Activated CD4-positive, alpha-beta memory T cell treated with anti-CD3 and anti-CD28 coated beads for 36 hours (primary cell): ENCODE measurements at regions of chr2 and their contacts with region 1.

Region 1: DNA sequence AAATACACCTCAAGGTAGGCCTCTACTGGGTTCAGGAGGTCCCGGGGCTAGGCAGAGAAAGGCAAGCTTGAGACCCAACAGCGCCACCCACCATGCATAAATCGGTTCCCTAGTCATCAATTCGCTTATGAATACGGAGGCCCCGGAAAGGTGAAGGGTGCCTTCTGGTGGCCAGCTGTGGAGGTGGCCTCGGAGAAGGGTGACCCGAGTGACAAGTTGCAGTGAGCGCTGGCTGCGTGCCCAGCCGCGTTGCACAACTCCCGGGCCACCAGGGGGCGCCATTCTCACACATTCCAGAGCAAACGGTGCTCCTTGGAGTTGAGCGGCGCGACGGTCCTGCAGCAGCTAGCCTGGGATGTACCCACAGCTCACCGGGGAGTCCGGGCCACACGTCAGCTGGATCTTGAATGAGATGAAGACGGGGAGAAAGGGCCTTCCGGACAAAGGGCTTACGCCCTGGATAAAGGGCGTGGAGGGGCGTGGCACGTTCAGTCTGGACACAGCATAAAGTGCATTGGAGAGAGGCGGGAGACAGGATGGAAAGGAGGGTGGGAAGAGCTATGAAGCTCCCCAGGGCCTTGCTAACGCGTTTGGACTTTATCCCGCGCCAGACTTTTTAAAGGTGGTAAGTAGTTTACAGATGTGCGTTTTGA is 20.4 kb downstream of the TMSB10 start:
- DNase-seq: peak; percentile 100
- H3K4me3 Mint-ChIP-seq: peak overlapping the region; percentile 82
- H3K27ac Mint-ChIP-seq: peak overlapping the region; percentile 93
- H3K4me1 Mint-ChIP-seq: peaks cover 41% of the 10 kb centered on the region
- H3K27me3 Mint-ChIP-seq: no peaks in the 10 kb centered on the region

Region 2: GRCh38 chr2:84495539-84496146 is 430.2 kb before region 1 on chr2:
- CTCF ChIA-PET with region 1: interaction called, 18 read pairs
- POLR2A ChIA-PET with region 1: no interaction called
- intact Hi-C with region 1: loop called (anchors 1 kb)
- DNase-seq: no peak
- H3K4me3 Mint-ChIP-seq: no peak overlapping the region
- H3K27ac Mint-ChIP-seq: no peak overlapping the region
- H3K4me1 Mint-ChIP-seq: peaks cover 17% of the 10 kb centered on the region
- H3K27me3 Mint-ChIP-seq: no peaks in the 10 kb centered on the region

Region 3: DNA sequence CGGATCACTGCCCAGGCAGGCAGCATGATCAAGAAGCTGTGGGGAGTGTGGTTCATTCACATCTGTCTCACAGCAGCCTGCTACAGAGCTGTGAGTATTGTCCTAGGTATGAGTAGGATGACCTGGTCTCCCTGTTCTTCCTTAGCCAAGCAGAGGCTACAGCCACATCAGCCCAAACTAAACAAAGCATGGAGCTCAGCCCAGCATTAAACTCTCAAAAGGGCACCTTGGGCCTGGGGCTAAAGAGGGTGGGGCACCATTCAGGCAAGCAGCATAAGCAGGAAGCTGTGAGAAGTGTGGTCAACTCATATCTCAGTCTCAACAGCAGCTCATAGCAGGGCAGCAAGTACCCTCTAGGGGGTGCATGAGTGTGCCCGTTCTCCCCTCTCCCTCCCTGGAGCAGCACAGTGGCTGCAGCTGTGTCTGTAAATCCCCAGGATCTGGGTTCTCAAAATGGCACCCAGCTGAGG is 184.5 kb before region 1 on chr2:
- CTCF ChIA-PET with region 1: interaction called, 17 read pairs
- POLR2A ChIA-PET with region 1: no interaction called
- intact Hi-C with region 1: loop called (anchors 2 kb)
- DNase-seq: peak; percentile 75
- H3K4me3 Mint-ChIP-seq: no peak overlapping the region
- H3K27ac Mint-ChIP-seq: no peak overlapping the region
- H3K4me1 Mint-ChIP-seq: peaks cover 10% of the 10 kb centered on the region
- H3K27me3 Mint-ChIP-seq: no peaks in the 10 kb centered on the region

Region 4: GRCh38 chr2:84846041-84846663 is 79.7 kb before region 1 on chr2:
- CTCF ChIA-PET with region 1: interaction called, 33 read pairs
- POLR2A ChIA-PET with region 1: interaction called, 3 read pairs
- intact Hi-C with region 1: loop called (anchors 2 kb)
- DNase-seq: no peak
- H3K4me3 Mint-ChIP-seq: peak overlapping the region; percentile 53
- H3K27ac Mint-ChIP-seq: peak overlapping the region; percentile 97
- H3K4me1 Mint-ChIP-seq: peaks cover 87% of the 10 kb centered on the region
- H3K27me3 Mint-ChIP-seq: no peaks in the 10 kb centered on the region

Region 5: DNA sequence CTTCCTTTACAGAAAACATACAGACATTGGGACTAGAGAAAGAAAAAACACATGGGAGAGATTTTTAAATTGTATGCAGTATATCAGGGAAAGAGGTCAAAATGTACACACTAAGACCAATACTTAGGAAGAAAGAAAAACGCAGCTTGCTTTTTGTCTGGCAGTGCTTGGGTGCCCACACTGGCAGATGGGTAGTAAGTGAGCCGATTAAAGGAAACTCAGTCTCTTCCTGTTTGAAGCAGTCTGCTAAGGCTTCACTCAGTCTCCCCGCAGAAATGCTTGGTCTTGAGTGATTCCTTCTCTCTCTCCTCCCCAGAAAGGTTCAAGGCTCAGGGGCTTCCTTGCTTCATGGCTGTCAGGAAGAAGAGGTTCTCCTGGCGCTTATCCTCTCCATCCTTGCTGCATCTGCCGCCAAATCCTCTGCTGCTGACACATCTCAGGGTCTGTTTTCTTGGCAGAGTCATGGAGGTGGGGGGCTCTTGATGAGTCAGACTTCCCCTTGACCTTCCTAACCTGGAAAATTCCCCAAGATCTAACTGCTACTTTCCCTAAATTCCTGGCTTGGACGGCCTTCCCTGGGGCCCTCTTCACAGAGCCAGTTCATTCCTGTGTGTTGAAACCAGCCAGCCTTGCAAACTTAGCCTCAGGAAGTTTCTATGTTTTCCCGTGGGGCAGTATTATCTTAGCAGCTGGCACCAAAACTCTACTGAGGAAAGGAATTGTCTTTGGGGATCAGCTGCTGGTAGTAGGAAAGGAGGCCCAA is 30.9 kb before region 1 on chr2:
- CTCF ChIA-PET with region 1: interaction called, 117 read pairs
- POLR2A ChIA-PET with region 1: interaction called, 5 read pairs
- intact Hi-C with region 1: loop called (anchors 1 kb)
- DNase-seq: no peak
- H3K4me3 Mint-ChIP-seq: peak overlapping the region; percentile 30
- H3K27ac Mint-ChIP-seq: peak overlapping the region; percentile 85
- H3K4me1 Mint-ChIP-seq: peaks cover 59% of the 10 kb centered on the region
- H3K27me3 Mint-ChIP-seq: no peaks in the 10 kb centered on the region

Region 6: GRCh38 chr2:84946204-84947009 is 20.6 kb after region 1 on chr2:
- CTCF ChIA-PET with region 1: interaction called, 181 read pairs
- POLR2A ChIA-PET with region 1: interaction called, 28 read pairs
- intact Hi-C with region 1: loop called (anchors 1 kb)
- DNase-seq: peak; percentile 88
- H3K4me3 Mint-ChIP-seq: peak overlapping the region; percentile 51
- H3K27ac Mint-ChIP-seq: peak overlapping the region; percentile 93
- H3K4me1 Mint-ChIP-seq: peaks cover 44% of the 10 kb centered on the region
- H3K27me3 Mint-ChIP-seq: no peaks in the 10 kb centered on the region

Region 7: GRCh38 chr2:85132834-85133637 is 207.2 kb after region 1 on chr2 and contains the start of gene TCF7L1:
- CTCF ChIA-PET with region 1: no interaction called
- POLR2A ChIA-PET with region 1: no interaction called
- intact Hi-C with region 1: loop called (anchors 5 kb)
- DNase-seq: peak; percentile 59
- H3K4me3 Mint-ChIP-seq: peak within 1 kb of the TSS; percentile 62
- H3K27ac Mint-ChIP-seq: no peak within 1 kb of the TSS
- H3K4me1 Mint-ChIP-seq: peaks cover 4% of the 10 kb centered on the region
- H3K27me3 Mint-ChIP-seq: peaks cover 50% of the 10 kb centered on the region
- total RNA-seq, gene TCF7L1: 0.07 TPM in 1 of 2 experiments, not detected in the other